ENCODE measurements at regions of chr2 and their contacts with region 1.

Region 1: DNA sequence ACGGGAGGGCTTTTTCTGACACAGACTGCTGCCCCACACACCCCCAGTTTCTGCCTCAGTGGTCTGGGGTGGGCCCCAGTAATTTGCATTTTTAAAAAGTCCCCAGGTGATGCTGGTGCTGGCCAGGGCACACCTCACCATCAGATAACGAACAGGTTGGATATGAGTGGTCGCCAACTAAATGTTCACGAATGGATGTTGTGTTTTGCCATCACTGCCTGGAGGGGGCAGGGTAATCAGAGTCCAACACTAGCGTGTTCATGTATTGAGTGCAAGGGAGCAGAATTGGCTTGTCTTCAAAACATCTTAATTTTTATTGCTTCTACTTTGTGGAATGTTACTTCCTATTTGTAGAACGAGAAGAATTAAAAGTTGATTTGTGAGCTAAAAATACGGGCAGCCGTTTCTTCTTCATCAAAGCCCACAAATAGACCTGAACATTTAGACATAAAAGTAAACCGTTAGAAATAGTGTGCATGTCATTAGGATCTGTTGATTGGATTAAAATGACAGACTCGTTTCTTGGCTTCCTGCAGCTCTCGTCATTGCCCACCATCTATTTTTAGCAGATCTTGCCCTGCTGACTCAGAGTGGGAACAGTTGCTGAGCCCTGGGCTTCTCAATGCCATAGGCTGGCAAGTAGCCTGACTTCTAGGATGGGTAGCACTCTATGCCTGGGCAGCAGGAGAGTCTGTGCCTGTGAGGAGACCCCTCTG is 45.2 kb downstream of the NCK2 start:
- DNase-seq: peak; percentile 48
- H3K4me3 ChIP-seq: no peak overlapping the region
- H3K27ac ChIP-seq: no peak overlapping the region
- H3K4me1 ChIP-seq: peaks cover 33% of the 10 kb centered on the region
- CTCF ChIP-seq: peak; percentile 71

Region 2: DNA sequence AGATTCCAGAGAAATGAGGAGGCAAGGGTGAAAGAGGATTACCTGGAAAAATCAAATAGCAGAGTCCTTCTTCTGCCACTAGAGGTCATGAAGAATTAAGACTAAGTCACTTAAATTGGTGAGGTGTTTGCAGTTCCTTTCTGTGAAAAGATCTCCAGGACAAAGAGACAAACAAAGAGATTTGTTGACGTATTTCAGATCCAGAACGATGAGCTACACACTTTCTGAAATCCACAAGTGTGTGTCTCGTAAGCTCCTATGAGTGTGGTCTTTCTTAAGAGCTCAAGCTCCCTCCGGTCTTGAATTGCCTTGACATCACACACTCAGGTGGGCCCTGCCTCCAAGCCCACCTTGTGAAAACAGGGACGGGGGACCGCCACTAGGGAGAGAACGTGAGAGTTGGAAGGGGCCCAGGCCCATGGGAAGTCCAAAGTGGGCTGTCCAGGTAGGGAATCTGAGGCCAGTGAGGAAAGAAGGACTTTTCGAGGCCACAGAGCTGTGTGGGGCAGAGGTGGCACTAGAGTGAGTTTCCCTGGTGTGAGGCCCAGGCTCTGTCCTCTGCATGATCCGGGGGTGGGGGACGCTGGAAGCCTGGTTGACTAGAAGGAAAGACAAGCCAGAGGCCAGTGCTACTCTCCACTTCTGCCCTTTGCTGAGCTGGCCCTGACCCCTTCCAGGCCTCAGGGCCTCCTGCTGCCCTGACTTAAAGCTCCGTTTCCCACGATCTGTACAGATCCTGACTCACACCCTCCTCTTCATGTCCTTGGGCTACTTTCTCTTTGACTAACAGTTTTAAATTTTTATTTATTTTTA is 213.3 kb before region 1 on chr2:
- CTCF ChIA-PET with region 1: interaction called, 5 read pairs
- POLR2A ChIA-PET with region 1: interaction called, 3 read pairs
- intact Hi-C with region 1: loop called (anchors 1 kb)
- DNase-seq: peak; percentile 54
- H3K4me3 ChIP-seq: no peak overlapping the region
- H3K27ac ChIP-seq: no peak overlapping the region
- H3K4me1 ChIP-seq: no peaks in the 10 kb centered on the region
- CTCF ChIP-seq: peak; percentile 76

Region 3: DNA sequence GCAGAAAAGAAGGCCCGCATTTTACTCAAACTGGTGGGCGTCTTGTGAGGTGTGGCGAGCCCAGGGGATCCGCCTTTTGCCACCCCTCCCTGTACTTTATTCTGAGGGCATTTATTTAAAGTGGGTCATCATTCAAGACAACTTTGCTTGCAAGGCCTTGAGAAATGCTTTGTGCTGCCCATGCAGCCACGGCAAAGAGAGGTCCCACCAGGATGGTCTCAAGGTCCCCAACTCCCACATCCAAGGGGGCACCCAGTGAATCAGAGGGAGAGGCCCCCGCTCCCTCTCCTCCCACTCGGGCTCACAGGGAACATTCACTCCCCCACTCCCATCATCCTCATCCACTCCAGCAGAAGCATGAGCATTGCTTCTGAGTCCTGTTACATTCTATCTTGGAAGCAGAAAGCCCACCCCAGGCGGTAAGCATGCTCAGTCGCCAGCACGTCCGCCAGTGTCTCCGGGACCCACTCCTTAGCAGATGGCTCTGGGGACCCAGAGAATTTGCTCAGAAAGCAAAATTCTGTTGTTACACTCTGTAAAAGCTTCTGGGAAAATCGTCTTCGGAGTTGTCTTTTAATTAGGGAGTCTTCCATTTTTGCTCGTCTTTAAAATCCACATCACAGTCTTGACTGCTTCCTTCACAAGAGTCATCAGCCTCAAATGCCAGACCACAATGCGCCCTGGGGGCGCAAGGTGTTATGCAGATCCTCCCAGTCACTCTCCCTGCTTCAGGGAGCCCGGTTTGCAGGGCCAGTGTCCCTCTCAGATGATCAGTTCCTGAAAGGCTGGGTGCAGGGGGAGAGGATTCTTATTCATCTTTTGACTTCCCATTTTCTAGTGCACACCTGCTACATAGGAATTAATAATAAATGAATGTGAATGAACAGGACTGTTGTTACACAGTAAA is 144.6 kb before region 1 on chr2:
- CTCF ChIA-PET with region 1: no interaction called
- POLR2A ChIA-PET with region 1: interaction called, 10 read pairs
- intact Hi-C with region 1: no loop called
- DNase-seq: no peak
- H3K4me3 ChIP-seq: no peak overlapping the region
- H3K27ac ChIP-seq: no peak overlapping the region
- H3K4me1 ChIP-seq: no peaks in the 10 kb centered on the region
- CTCF ChIP-seq: no peak

Region 4: DNA sequence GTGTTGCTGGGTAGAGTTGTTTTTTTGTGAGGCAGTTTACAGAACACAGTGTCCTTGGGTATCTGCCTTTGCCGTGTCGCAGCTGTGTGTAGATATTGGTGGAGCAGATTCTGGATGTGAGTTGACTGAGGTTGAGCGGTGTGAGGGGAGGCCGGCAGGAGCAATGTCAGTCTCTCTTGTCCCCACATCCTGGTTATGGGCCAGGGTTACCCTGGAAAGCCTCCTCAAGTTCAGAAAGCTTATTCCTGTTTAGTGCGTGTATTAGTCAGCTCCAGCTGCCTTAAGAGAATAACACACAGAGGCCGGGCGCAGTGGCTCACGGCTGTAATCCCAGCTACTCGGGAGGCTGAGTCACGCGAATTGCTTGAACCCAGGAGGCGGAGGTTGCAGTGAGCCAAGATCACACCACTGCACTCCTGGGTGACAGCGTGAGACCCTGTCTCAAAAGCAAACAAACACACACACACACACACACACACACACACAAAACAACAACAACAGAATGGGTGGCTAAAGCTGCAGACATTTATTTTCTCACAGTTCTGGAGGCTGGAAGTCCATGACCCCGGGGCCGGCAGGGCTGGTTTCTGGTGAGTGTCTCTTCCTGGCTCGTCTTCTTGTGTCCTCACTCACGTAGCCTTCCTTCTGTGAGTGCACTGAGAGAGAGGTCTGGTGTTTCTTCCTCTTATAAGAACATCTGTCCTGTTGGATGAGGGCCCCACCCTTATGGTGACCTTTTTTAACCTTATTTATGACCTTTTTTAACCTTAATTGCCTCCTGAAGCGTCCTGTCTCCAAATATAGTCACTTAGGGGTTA is 40.1 kb before region 1 on chr2:
- CTCF ChIA-PET with region 1: interaction called, 3 read pairs
- POLR2A ChIA-PET with region 1: interaction called, 4 read pairs
- intact Hi-C with region 1: loop called (anchors 2 kb)
- DNase-seq: no peak
- H3K4me3 ChIP-seq: no peak overlapping the region
- H3K27ac ChIP-seq: no peak overlapping the region
- H3K4me1 ChIP-seq: peaks cover 47% of the 10 kb centered on the region
- CTCF ChIP-seq: no peak

Region 5: DNA sequence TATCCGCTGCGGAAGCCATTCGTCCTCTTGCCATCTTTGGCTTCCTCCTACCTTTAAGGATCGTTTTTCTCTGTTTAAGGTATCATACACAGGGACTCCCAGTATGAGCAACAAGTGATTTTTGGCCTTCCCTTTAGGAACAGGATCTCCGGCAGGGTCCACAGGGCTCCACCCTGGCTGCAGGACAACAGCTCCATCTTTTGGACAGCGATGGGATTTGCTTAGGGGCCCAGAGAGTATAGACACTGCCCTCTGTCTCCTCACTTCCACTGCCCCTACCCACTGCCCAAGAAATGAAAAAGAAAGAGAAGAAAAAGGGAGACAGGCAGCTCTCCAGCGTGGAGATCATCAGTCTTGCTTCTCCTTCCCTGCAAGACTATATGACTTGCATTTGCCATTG is 179.7 kb after region 1 on chr2:
- CTCF ChIA-PET with region 1: no interaction called
- POLR2A ChIA-PET with region 1: no interaction called
- intact Hi-C with region 1: loop called (anchors 10 kb)
- DNase-seq: peak; percentile 35
- H3K4me3 ChIP-seq: no peak overlapping the region
- H3K27ac ChIP-seq: no peak overlapping the region
- H3K4me1 ChIP-seq: peaks cover 7% of the 10 kb centered on the region
- CTCF ChIP-seq: peak; percentile 73